A549 (cell line): ENCODE measurements at regions of chr10 and their contacts with region 1.

Region 1: DNA sequence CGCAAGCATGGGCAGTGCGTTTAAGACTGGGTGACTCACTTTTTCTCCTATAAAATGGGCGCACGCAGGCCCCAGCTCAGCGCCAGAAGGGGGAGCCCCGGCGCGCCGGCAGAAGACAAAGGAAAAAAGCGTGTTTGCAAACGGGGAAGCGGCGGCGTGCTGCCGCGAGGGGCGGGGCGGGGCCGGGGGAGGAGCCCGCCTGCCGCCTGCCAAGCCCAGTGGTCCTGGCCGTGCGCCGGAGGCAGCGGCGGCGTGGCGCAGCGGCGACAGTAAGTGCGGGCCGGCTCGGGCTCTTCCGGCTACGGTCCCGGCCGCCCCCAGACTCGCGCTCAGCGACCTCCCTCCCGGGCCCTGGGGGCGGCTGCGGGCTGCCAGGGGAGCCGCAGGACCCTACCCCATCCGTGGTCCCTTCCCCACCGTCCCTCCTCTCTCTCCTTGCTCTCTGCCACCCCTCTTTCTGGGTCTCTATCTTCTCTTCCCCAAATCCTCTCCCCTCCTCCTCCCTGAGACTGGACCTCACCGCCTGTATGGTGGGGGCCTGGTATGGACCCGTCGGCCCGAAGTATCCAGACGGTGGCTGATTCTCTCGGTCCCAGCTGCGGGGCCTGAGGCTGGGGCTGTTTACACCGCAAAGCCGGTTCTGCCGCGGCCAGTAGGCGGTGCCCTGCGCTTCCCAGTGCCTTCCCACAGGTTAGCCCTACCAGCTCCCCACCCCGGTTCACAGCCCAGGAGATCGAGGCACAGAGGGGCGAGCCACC is at the start of gene SLC29A3:
- DNase-seq: peak; percentile 79 to 83
- ATAC-seq: peak; percentile 93 to 96
- H3K4me3 ChIP-seq: peak within 1 kb of the TSS; percentile 78
- H3K27ac ChIP-seq: peak within 1 kb of the TSS; percentile 89 to 96
- H3K4me1 ChIP-seq: peaks cover 14% of the 10 kb centered on the region
- CTCF ChIP-seq: peak; percentile 81
- EP300 ChIP-seq: no peak
- POLR2A ChIP-seq: peak; percentile 73
- RAD21 ChIP-seq: peak; percentile 79 to 81
- polyA plus RNA-seq, gene SLC29A3: 7.2 and 12.6 TPM in 2 replicates

Region 2: GRCh38 chr10:70887804-70888800 is 431.1 kb before region 1 on chr10 and contains the start of gene PCBD1:
- CTCF ChIA-PET with region 1: no interaction called
- POLR2A ChIA-PET with region 1: no interaction called
- DNase-seq: peak; percentile 77 to 81
- ATAC-seq: peak; percentile 92 to 93
- H3K4me3 ChIP-seq: peak within 1 kb of the TSS; percentile 87
- H3K27ac ChIP-seq: peak within 1 kb of the TSS; percentile 94 to 98
- H3K4me1 ChIP-seq: peaks cover 20% of the 10 kb centered on the region
- CTCF ChIP-seq: no peak
- EP300 ChIP-seq: no peak
- POLR2A ChIP-seq: peak; percentile 85
- RAD21 ChIP-seq: no peak
- polyA plus RNA-seq, gene PCBD1: 169 TPM in 2 replicates

Region 3: DNA sequence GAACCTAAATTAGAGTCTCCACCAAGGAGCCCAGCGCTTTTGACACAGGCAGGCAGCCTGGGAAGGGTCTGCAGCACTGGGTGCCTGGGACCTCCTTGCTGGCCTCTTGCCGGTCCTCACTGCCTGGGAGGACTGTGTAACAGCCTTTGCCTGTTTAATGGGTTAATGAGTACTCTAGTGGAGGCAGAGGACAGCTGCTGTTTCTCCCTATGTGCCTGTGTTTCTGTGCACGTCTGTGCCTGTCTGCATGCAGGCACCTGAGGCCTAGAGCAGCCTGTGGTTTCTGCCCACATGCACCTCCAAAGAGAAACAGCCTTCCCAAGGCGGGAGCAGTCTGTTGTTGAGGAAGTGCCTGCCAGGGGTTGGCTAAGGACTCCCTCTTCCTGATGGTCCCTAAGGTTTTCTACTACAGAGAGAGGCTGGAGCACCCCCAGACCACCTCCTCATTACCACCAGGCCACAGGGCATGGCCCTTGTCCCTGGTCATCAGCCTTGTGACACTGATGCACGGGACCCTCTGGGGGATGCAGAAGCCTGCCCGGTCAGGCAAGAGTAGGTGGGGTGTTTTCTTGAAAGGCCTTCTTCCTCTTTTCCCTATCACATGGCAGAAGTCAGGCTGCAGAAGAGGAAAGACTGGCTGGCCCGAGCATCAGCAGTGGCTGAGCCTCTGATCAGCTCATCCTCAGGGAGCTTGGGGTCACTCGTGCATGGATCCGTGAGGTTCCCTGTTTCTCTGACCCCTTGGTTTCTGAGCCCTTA is 14.1 kb after region 1 on chr10:
- CTCF ChIA-PET with region 1: interaction called, 61 read pairs
- POLR2A ChIA-PET with region 1: interaction called, 8 read pairs
- DNase-seq: no peak
- ATAC-seq: peak in 1 of 2 experiments; percentile 8; a peak in 2 of 6 replicates
- H3K4me3 ChIP-seq: no peak overlapping the region
- H3K27ac ChIP-seq: peak overlapping the region; percentile 61 to 79
- H3K4me1 ChIP-seq: peaks cover 61% of the 10 kb centered on the region
- CTCF ChIP-seq: no peak
- EP300 ChIP-seq: no peak
- POLR2A ChIP-seq: no peak
- RAD21 ChIP-seq: no peak

Region 4: DNA sequence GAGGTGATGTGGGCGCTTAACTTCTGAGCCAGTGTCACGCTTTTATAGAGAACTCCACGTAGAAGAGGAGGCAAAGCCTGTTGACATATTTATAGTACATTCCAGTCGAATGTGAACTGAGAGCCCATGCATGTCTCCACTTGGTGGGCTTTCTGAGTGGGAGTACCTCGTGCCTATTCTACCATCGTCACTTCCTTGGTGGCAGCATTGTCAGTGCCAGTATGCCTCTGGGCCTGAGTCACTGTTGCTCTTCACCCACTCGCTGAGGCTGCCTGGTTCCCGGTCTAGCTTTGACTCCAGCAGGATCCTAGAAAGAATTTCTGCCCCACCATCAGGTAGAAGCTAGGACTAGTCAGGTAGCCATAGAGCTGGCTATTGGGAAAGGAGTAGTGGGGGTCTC is 47.5 kb after region 1 on chr10:
- CTCF ChIA-PET with region 1: interaction called, 977 read pairs
- POLR2A ChIA-PET with region 1: interaction called, 24 read pairs
- DNase-seq: no peak
- ATAC-seq: no peak
- H3K4me3 ChIP-seq: no peak overlapping the region
- H3K27ac ChIP-seq: peak overlapping the region in 1 of 2 experiments; percentile 42; a peak in 1 of 6 replicates
- H3K4me1 ChIP-seq: peaks cover 17% of the 10 kb centered on the region
- CTCF ChIP-seq: no peak
- EP300 ChIP-seq: no peak
- POLR2A ChIP-seq: no peak
- RAD21 ChIP-seq: no peak

Region 5: GRCh38 chr10:71383972-71384687 is 64.9 kb after region 1 on chr10:
- CTCF ChIA-PET with region 1: interaction called, 977 read pairs
- POLR2A ChIA-PET with region 1: interaction called, 4 read pairs
- DNase-seq: peak; percentile 58 to 78
- ATAC-seq: peak; percentile 91 to 98
- H3K4me3 ChIP-seq: no peak overlapping the region
- H3K27ac ChIP-seq: no peak overlapping the region
- H3K4me1 ChIP-seq: no peaks in the 10 kb centered on the region
- CTCF ChIP-seq: peak; percentile 86
- EP300 ChIP-seq: no peak
- POLR2A ChIP-seq: no peak
- RAD21 ChIP-seq: peak; percentile 85 to 89

Region 6: DNA sequence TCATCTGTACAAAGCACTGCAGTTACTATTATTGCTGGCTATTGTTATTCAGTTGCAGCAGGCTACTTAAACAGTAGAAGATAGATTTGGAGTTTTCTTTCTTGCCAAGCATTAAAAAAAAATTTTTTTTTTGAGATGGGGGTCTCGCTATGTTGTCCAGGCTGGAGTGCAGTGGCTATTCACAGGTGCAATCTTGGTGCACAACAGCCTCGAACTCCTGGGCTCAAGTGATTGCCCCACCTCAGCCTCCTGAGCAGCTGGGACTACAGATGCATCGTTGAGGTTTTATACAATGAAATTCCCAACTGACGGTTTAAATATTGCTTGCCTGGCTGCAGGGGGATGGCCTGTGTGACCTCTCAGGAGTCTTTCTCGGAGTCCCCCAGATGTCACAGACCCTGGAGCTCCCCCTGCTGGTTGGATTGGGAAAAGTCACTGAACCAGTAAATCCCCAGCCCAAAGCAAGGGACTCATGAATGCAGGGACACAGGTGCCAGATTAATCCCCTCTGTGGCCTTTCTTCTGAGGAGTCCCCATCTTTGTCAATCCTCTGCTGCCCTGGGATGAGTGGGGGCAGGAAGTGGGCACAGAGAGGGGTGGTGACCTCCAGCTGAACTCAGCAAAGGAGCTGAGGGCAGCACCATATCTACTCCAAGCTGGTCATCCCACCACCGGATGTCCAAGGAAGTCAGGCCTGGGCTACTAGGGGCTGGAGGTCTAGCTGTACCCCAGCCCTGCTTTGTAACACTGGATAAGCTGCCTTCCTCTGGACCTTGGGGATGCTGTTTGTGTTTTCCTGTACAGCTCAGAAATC is 250.8 kb after region 1 on chr10:
- CTCF ChIA-PET with region 1: interaction called, 69 read pairs
- POLR2A ChIA-PET with region 1: interaction called, 6 read pairs
- DNase-seq: peak; percentile 56 to 76
- ATAC-seq: peak; percentile 66 to 85; a peak in 4 of 6 replicates
- H3K4me3 ChIP-seq: no peak overlapping the region
- H3K27ac ChIP-seq: no peak overlapping the region
- H3K4me1 ChIP-seq: no peaks in the 10 kb centered on the region
- CTCF ChIP-seq: peak; percentile 86
- EP300 ChIP-seq: no peak
- POLR2A ChIP-seq: no peak
- RAD21 ChIP-seq: peak; percentile 78 to 81

Region 7: DNA sequence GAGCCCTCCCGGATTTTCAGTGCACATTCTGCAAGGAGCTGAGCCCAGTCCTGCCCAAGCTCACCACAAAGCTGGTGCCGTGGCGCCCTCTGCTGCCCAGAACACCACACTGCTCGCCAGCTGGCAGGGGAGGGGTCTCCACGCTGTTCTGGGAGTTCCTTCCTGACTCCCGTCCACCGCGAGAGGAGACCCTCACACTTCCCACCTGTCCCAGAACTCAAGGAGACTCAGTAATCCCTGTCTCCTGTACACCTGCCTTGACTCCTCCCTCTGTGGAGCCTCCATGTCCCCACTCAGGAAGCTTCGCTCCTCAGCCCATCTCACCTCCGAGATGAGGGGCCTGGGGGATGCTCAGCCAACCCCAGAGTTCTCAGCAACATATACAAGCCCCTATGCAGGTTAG is 389.1 kb after region 1 on chr10:
- CTCF ChIA-PET with region 1: interaction called, 133 read pairs
- POLR2A ChIA-PET with region 1: interaction called, 5 read pairs
- DNase-seq: peak; percentile 41 to 42
- ATAC-seq: peak; percentile 66 to 87
- H3K4me3 ChIP-seq: no peak overlapping the region
- H3K27ac ChIP-seq: peak overlapping the region in 1 of 2 experiments; percentile 52; a peak in 3 of 6 replicates
- H3K4me1 ChIP-seq: peaks cover 11% of the 10 kb centered on the region
- CTCF ChIP-seq: peak; percentile 74
- EP300 ChIP-seq: no peak
- POLR2A ChIP-seq: no peak
- RAD21 ChIP-seq: peak; percentile 79 to 83

Region 8: DNA sequence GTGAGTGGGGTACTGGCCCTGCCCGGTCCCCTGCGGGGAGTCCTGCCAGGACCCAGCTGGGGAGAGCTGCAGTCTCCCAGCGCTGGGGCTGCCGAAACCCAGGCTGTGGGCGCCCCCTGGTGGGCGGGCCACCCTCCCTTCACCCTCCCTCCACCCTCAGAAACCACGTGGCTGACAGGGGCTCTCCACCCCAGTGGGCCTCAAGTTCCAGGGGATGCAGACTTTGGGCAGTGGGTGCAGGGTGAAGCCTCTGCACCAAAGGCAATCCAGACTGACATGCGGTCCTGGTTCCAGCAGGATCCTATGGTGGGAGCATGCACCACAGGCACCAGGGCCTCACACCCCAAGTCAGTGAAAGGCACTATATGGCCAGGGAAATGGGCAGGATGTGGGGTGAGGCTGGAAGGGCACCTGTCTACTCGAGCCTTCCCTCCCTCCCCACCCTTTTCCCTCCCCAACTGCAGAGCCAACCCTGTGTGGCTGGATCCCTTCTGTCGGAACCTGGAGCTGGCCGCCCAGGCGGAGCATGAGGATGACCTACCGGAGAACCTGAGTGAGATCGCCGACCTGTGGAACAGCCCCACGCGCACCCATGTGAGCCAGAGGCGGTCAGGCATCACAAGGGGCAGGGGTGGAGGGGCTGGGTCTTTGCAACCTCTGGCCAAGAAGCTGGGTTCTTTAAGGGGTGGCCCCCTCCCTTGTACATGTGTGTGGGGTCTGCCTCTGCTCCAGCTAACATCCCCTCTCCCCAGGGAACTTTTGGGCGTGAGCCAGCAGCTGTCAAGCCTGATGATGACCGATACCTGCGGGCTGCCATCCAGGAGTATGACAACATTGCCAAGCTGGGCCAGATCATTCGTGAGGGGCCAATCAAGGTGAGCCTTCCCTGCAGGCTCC is 493.0 kb after region 1 on chr10:
- CTCF ChIA-PET with region 1: interaction called, 20 read pairs
- POLR2A ChIA-PET with region 1: no interaction called
- DNase-seq: peak; percentile 61 to 82
- ATAC-seq: peak; percentile 61 to 89
- H3K4me3 ChIP-seq: no peak overlapping the region
- H3K27ac ChIP-seq: peak overlapping the region in 1 of 2 experiments; percentile 43; a peak in 3 of 6 replicates
- H3K4me1 ChIP-seq: peaks cover 18% of the 10 kb centered on the region; the same call in 2 of the 3 replicates
- CTCF ChIP-seq: peak; percentile 87
- EP300 ChIP-seq: no peak
- POLR2A ChIP-seq: no peak
- RAD21 ChIP-seq: peak; percentile 89 to 91